Transverse colon (tissue), 4 donors: ENCODE measurements at regions of chr20 and their contacts with region 1.

Region 1: GRCh38 chr20:22586645-22587310 is 2.4 kb upstream of the FOXA2 start:
- DNase-seq: peak; percentile 73
- H3K4me3 ChIP-seq: peak overlapping the region in 3 of 4 donors; percentile 9 to 46 (median 22)
- H3K27ac ChIP-seq: no peak overlapping the region
- H3K4me1 ChIP-seq: peaks cover 0 to 40% (median 22%) of the 10 kb centered on the region in 4 donors
- H3K27me3 ChIP-seq: peaks cover 96% of the 10 kb centered on the region
- CTCF ChIP-seq: peak; percentile 50 to 85 (median 77)
- EP300 ChIP-seq: no peak
- POLR2A ChIP-seq: no peak

Region 2: DNA sequence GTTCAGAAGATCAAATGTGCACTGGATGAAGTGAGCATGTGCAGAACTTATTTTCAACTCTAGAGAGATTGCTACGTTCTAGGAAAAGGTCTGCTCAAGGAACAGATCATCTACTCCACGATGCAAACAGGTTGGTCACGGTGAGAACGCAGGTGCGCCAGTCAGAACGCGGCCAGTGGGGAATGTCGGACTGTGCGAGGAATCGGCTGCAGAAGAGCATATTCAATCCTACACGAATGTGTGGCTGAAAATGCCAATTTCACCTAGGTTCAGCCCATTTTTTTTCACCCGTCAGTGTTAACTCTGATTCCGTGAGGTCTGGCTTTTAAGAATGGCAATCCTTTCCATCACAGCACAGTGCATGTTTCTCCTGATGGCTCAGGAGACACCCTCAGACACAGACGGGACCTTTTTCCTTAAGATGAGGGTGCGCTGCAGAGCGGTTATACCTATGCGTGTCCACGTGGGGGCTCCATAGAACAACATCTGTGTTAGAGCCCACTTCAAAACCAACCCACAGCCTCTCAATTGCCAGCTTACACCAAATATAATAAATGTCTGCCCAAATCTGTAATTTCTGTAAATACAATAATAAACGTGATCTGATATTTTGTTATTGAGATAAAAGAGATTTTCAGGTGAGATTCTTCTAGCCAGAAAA is 252.8 kb before region 1 on chr20:
- in situ Hi-C with region 1: loop called (anchors 10 to 25 kb)
- intact Hi-C with region 1: no loop called
- DNase-seq: peak; percentile 52
- H3K4me3 ChIP-seq: no peak overlapping the region
- H3K27ac ChIP-seq: no peak overlapping the region
- H3K4me1 ChIP-seq: peaks cover 0 to 2% (median 0%) of the 10 kb centered on the region in 4 donors
- H3K27me3 ChIP-seq: peaks cover 39% of the 10 kb centered on the region
- CTCF ChIP-seq: peak; percentile 65 to 76 (median 65)
- EP300 ChIP-seq: no peak
- POLR2A ChIP-seq: no peak